Kidney (tissue), 22 donors: ENCODE measurements at regions of chr3 and their contacts with region 1.

Region 1: GRCh38 chr3:146334151-146334550 is 83.2 kb upstream of the PLSCR4 start:
- DNase-seq: no peak
- H3K4me3 ChIP-seq: no peak overlapping the region
- H3K27ac ChIP-seq: no peak overlapping the region
- H3K4me1 ChIP-seq: no peaks in the 10 kb centered on the region
- H3K27me3 ChIP-seq: no peaks in the 10 kb centered on the region
- CTCF ChIP-seq: peak; percentile 4

Region 2: GRCh38 chr3:146577662-146578061 is 243.5 kb after region 1 on chr3:
- intact Hi-C with region 1: loop called (anchors 10 kb)
- DNase-seq: peak in 2 of 5 donors; percentile 53 to 74
- H3K4me3 ChIP-seq: no peak overlapping the region
- H3K27ac ChIP-seq: no peak overlapping the region
- H3K4me1 ChIP-seq: no peaks in the 10 kb centered on the region
- H3K27me3 ChIP-seq: no peaks in the 10 kb centered on the region
- CTCF ChIP-seq: peak; percentile 49